Right cardiac atrium (tissue), 5 donors: ENCODE measurements at regions of chr10 and their contacts with region 1.

Region 1: DNA sequence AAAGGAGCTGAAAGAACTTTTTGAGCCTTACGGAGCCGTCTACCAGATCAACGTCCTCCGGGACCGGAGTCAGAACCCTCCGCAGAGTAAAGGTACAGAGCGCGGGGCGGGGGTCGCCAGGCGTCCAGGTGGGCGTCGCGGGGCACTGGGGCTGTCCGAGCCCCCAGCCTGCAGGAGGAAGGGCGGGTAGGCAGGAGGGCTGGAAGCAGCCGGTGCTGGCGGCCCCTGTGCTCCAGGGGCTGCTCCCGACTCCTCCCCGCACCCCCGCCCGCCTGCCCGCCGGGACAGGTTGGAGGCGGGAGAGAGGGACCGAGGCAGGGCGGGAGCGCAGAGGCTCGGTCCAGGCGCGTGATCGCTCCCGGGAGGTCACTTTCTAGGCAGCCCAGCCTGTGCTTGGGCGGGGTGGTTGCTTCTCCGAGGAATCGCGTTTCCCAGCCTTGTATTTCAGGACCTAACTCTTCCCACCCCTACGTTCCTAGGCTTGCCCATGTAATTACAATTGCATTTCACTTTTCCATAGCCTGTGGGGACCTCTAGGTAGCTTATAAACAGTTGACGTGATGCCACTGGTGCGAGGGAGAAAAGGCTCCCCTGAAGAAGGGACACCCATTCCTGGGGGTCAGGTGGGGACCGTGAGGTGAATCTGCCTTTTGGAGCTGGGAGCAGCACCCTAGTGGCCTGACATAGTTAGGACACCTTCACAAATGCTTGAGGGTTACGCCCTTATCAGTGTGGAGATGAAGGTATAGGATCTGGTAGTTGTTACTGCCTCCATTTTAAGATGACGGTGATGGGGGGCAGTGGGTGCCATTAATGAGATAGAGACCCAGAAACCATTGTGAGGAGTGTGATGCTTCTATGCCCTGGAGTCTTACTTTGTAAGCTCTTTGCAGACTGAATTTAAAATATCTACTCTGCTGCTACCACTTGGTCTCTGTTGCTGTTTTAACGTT is 148.2 kb downstream of the CELF2 start:
- DNase-seq: peak; percentile 45 to 88 (median 86)
- ATAC-seq: peak; percentile 74 to 78
- H3K4me3 ChIP-seq: peak overlapping the region; percentile 78
- H3K27ac ChIP-seq: peak overlapping the region; percentile 90
- H3K4me1 ChIP-seq: peaks cover 14% of the 10 kb centered on the region
- H3K27me3 ChIP-seq: no peaks in the 10 kb centered on the region

Region 2: GRCh38 chr10:11113156-11113555 is 52.7 kb before region 1 on chr10:
- intact Hi-C with region 1: loop called in 1 of 4 experiments (anchors 10 kb)
- DNase-seq: no peak
- ATAC-seq: no peak
- H3K4me3 ChIP-seq: no peak overlapping the region
- H3K27ac ChIP-seq: no peak overlapping the region
- H3K4me1 ChIP-seq: peaks cover 11% of the 10 kb centered on the region
- H3K27me3 ChIP-seq: no peaks in the 10 kb centered on the region